Activated naive CD4-positive, alpha-beta T cell treated with anti-CD3 and anti-CD28 coated beads, Interleukin-2, amount 10 ng/mL, durations not matched to agents 7 days and 5 days (primary cell): ENCODE measurements at regions of chr14 and their contacts with region 1.

Region 1: DNA sequence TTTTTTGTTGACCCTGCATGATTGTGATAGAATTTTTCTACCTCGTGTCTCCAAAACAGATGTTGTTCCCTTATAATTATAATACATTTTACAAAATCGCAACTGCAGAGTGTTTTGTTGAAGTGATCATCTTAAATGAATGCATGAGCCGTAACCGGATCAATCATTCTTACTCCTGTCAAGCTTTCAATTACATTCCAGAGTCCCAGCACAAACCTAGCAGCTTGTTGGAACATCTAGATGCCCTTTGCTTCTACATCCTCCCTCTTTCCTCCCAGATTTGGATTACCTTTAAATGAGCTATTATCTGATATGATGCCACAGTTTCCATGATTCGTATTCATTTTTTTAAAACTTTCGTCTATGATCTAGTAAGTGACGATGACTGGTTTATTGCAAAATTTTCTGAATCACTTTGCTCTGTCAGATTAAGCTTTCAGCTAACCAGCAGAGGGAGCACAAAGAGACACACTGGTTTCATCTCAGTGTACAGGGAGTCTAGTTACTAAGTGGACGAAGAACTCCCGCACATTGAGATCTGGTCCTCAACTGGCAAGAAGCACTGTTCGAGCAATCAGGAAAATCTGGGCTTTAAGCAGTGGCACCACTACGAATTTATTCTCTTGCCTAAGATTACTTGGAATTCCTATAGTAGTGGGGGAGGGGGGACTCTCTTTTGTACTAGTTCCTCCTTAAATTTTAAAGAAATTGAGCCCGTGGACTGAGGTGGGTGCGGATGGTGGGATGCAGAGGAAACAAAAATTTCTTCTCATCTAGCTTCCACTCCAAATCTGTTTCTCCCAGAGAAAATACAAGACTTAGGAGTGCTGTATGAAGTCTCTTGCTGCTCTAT is 40.9 kb downstream of the TSHR start:
- DNase-seq: peak; percentile 38
- H3K4me3 Mint-ChIP-seq: no peak overlapping the region
- H3K27ac Mint-ChIP-seq: no peak overlapping the region
- H3K4me1 Mint-ChIP-seq: peaks cover 6% of the 10 kb centered on the region
- H3K27me3 Mint-ChIP-seq: peaks cover 18% of the 10 kb centered on the region

Region 2: GRCh38 chr14:80906946-80907345 is 89.3 kb before region 1 on chr14:
- CTCF ChIA-PET with region 1: no interaction called
- DNase-seq: no peak
- H3K4me3 Mint-ChIP-seq: no peak overlapping the region
- H3K27ac Mint-ChIP-seq: no peak overlapping the region
- H3K4me1 Mint-ChIP-seq: peaks cover 5% of the 10 kb centered on the region
- H3K27me3 Mint-ChIP-seq: no peaks in the 10 kb centered on the region

Region 3: DNA sequence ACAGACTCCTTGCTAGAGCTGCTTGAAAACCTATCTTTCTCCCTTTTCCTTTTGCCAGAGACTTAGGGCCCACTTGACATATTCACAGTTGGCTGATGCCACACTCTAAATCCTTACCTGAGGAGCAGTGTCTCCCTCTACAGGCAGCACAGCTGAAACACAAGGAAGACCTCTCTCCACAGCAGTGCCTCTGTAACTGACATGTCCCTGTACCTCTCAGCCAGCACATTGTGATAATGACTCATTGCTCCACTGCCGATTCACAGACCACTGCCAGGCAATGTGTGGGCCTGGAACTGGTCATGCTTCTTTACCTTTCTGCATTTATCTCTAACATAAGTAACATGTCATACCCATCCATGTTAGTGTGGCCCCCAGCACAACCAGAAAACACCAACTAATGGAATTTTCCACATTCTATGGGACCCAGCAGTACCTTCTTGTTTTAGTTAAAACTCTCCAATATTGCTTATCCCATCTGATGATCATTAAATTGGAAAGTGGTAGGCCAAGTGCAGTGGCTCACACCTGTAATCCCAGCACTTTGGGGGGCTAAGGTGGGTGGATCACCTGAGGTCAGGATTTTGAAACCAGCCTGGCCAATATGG is 168.0 kb after region 1 on chr14:
- CTCF ChIA-PET with region 1: interaction called, 32 read pairs
- DNase-seq: peak; percentile 67
- H3K4me3 Mint-ChIP-seq: no peak overlapping the region
- H3K27ac Mint-ChIP-seq: no peak overlapping the region
- H3K4me1 Mint-ChIP-seq: peaks cover 23% of the 10 kb centered on the region
- H3K27me3 Mint-ChIP-seq: no peaks in the 10 kb centered on the region